Activated CD8-positive, alpha-beta T cell treated with anti-CD3 and anti-CD28 coated beads, Interleukin-2, amount 10 ng/mL, durations not matched to agents 7 days and 5 days (primary cell): ENCODE measurements at regions of chr1 and their contacts with region 1.

Region 1: DNA sequence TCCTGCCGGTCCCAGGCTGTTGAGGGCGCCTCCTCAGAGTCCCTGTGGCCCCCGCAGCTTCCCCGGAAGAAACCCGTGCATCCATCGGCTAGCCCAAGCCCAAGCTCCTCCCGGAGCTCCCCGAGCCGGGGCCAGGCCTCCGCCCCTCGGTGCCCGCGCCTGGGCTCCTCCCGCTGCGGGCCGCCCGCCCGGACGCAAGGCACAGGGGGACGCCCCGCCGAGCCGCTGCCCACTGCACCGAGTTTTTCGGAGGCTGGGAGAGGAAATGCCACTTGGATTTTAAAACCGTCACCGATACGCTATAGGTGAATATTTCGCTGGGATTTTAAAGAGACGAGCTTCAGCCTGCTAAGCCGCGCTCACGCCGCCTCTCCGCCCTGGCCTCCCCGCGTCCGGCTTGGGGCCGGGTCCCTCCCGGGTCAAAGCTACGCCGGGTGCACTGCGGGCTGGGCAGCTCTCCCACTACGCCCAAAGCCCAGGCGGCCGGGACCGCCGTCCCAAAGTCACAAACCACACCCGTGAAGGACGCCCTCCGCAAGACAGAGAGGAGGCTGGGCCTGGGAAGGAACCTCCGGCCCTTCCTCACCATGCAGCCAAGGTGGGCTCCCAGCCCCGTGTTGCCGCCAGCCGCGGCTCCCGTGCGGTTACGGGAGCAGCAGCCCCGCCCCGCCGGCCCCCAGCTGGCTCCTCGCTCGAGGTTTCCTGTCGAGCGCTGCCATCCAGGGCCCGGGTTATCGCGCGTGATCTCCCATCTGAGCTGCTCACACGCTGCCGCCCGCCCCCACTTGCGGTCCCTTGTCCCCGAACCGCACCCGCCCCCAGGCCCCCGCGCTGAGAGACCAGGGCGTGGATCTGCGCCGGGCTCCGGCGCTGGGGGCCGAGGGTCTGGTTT is 63.2 kb downstream of the CD247 start:
- DNase-seq: peak; percentile 88
- ATAC-seq: peak; percentile 70
- H3K4me3 Mint-ChIP-seq: peak overlapping the region; percentile 78
- H3K27ac Mint-ChIP-seq: peak overlapping the region; percentile 81
- H3K4me1 Mint-ChIP-seq: peaks cover 75% of the 10 kb centered on the region
- H3K27me3 Mint-ChIP-seq: no peaks in the 10 kb centered on the region

Region 2: DNA sequence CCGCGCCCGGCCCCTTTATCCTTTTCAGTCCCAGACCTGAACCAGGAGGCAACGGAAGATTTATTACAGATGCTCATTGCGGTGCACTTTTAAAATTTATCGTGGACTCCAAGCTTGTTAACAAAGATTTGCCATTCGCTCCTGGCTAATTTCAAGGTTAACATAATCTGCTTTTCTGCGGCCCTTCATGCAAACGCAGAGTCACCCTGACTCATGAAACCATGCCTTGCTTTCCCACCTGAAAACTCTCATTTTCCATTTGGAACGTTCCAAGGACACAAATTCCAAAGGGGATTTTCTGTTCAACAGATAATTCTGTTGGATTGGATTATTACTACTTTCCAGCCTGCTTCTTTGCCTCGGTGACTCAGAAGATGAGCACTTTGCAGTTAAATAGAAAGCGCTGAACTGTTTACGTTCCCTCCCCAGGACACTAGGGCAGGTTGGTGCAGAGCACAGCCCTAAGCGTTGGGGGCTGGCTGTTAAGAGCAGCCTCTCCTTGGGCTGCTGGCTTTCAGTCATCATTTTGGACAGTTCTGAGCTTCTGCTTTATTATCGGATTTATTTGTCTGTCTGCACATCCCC is 12.1 kb after region 1 on chr1:
- CTCF ChIA-PET with region 1: interaction called, 26 read pairs
- POLR2A ChIA-PET with region 1: interaction called, 5 read pairs
- DNase-seq: no peak
- ATAC-seq: no peak
- H3K4me3 Mint-ChIP-seq: no peak overlapping the region
- H3K27ac Mint-ChIP-seq: no peak overlapping the region
- H3K4me1 Mint-ChIP-seq: peaks cover 65% of the 10 kb centered on the region
- H3K27me3 Mint-ChIP-seq: no peaks in the 10 kb centered on the region

Region 3: GRCh38 chr1:167474191-167474716 is 19.1 kb after region 1 on chr1:
- CTCF ChIA-PET with region 1: interaction called, 13 read pairs
- POLR2A ChIA-PET with region 1: interaction called, 5 read pairs
- DNase-seq: peak; percentile 52
- ATAC-seq: peak; percentile 77
- H3K4me3 Mint-ChIP-seq: peak overlapping the region; percentile 53
- H3K27ac Mint-ChIP-seq: peak overlapping the region; percentile 79
- H3K4me1 Mint-ChIP-seq: peaks cover 83% of the 10 kb centered on the region
- H3K27me3 Mint-ChIP-seq: no peaks in the 10 kb centered on the region

Region 4: DNA sequence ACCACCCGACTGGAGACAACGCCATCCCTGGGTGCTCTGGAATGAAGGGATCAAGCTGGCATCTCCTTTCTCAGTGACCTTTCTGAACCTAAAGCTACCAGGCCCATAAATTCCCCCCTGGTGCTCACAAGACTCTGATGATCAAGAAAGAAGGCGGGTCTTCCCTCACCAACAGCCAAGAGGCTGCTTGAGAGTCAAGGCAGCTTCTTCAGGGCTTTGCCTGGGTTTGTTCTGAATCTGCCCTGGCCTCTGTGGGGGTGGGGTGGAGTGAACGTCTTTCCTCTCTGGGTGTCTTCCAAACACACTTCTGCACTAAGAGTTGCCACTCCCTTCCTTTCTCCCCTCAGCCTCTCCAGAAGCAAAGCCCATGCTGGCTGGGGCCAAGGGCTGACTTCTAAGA is 27.0 kb after region 1 on chr1:
- CTCF ChIA-PET with region 1: interaction called, 5 read pairs
- POLR2A ChIA-PET with region 1: interaction called, 12 read pairs
- DNase-seq: peak; percentile 64
- ATAC-seq: peak; percentile 21
- H3K4me3 Mint-ChIP-seq: peak overlapping the region; percentile 73
- H3K27ac Mint-ChIP-seq: peak overlapping the region; percentile 96
- H3K4me1 Mint-ChIP-seq: peaks cover 97% of the 10 kb centered on the region
- H3K27me3 Mint-ChIP-seq: no peaks in the 10 kb centered on the region

Region 5: DNA sequence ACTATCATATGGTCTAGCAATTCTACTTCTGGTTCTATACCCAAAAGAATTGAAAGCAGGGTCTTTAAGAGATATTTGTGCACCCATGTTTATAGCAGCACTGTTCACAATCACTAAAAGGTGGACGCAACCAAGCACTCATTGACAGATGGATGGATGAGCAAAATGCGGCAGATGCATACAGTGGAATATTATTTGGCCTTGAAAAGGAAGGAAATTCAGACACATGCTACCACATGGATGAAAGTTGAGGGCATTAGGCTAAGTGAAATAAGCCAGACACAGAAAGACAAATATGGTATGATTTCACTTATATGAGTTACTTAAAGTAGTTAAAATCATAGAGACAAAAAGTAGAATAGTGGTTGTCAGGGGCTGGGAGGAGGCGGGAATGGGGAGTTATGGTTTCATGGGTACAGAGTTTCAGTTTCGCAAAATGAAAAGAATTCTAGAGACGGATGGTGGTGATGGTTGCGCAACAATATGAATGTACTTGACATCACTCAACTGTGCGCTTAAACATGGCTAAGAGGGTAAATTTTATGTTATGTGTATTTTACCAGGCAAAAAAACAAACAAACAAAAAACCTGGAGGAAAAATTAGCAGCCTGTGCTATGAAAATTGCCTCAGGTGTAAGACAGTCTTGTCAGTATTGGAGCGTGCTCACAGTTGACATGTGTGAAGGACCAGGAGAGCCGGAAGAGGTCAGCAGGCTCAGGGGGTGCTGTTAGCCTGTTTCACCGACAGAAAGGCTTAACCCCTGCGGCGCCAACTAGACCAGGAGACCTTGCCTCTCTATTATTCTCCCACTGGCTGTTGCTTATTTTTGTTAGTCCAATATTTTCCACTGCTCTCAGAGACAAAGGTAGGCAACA is 36.7 kb after region 1 on chr1:
- CTCF ChIA-PET with region 1: interaction called, 4 read pairs
- POLR2A ChIA-PET with region 1: interaction called, 13 read pairs
- DNase-seq: peak; percentile 73
- ATAC-seq: peak; percentile 65
- H3K4me3 Mint-ChIP-seq: peak overlapping the region; percentile 77
- H3K27ac Mint-ChIP-seq: peak overlapping the region; percentile 94
- H3K4me1 Mint-ChIP-seq: peaks cover 92% of the 10 kb centered on the region
- H3K27me3 Mint-ChIP-seq: no peaks in the 10 kb centered on the region

Region 6: DNA sequence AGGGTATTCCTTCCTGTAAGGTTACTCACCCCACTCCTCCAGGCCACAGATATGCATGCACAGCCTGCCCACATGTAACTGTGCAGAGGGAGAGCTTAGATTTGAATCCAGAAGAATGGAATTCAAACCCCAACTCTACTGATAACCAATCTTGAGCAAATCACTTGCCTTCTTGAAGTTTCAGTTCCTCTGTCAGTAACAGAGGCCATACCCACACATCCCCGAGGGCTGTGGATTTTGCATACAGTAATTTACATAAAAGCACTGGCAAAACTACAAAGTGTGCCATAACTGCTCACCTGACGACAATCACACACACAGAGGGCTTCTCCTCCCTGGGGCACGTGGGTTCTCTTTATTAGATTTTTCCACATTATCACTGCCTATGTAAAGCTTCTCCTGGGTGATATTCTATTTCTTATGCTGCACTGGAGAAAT is 44.5 kb after region 1 on chr1:
- CTCF ChIA-PET with region 1: interaction called, 15 read pairs
- POLR2A ChIA-PET with region 1: interaction called, 13 read pairs
- DNase-seq: peak; percentile 60
- ATAC-seq: peak; percentile 61
- H3K4me3 Mint-ChIP-seq: peak overlapping the region; percentile 66
- H3K27ac Mint-ChIP-seq: peak overlapping the region; percentile 86
- H3K4me1 Mint-ChIP-seq: peaks cover 100% of the 10 kb centered on the region
- H3K27me3 Mint-ChIP-seq: no peaks in the 10 kb centered on the region